AG04450 (cell line): ENCODE measurements at regions of chr13 and their contacts with region 1.

Region 1: GRCh38 chr13:36282818-36283445 is 14.7 kb downstream of the CCDC169 start:
- DNase-seq: peak; percentile 4
- H3K4me3 ChIP-seq: no peak overlapping the region
- H3K27ac ChIP-seq: no peak overlapping the region
- H3K27me3 ChIP-seq: no peaks in the 10 kb centered on the region
- CTCF ChIP-seq: peak; percentile 88

Region 2: GRCh38 chr13:36261976-36262375 is 21.0 kb before region 1 on chr13:
- CTCF ChIA-PET with region 1: interaction called, 12 read pairs
- POLR2A ChIA-PET with region 1: no interaction called
- DNase-seq: no peak
- H3K4me3 ChIP-seq: no peak overlapping the region
- H3K27ac ChIP-seq: no peak overlapping the region
- H3K27me3 ChIP-seq: no peaks in the 10 kb centered on the region
- CTCF ChIP-seq: no peak

Region 3: GRCh38 chr13:36306072-36306471 is 23.1 kb after region 1 on chr13:
- CTCF ChIA-PET with region 1: interaction called, 19 read pairs
- POLR2A ChIA-PET with region 1: no interaction called
- DNase-seq: no peak
- H3K4me3 ChIP-seq: no peak overlapping the region
- H3K27ac ChIP-seq: no peak overlapping the region
- H3K27me3 ChIP-seq: no peaks in the 10 kb centered on the region
- CTCF ChIP-seq: no peak

Region 4: GRCh38 chr13:36346222-36347083 is 63.5 kb after region 1 on chr13 and contains the start of gene SPART:
- CTCF ChIA-PET with region 1: interaction called, 18 read pairs
- POLR2A ChIA-PET with region 1: no interaction called
- DNase-seq: peak; percentile 78
- H3K4me3 ChIP-seq: peak within 1 kb of the TSS; percentile 83
- H3K27ac ChIP-seq: peak within 1 kb of the TSS; percentile 100
- H3K27me3 ChIP-seq: no peaks in the 10 kb centered on the region
- CTCF ChIP-seq: peak; percentile 98
- polyA plus RNA-seq, gene SPART: 69.7 and 94.6 TPM in 2 replicates

Region 5: GRCh38 chr13:36395280-36395679 is 112.3 kb after region 1 on chr13:
- CTCF ChIA-PET with region 1: interaction called, 90 read pairs
- POLR2A ChIA-PET with region 1: no interaction called
- DNase-seq: peak; percentile 27
- H3K4me3 ChIP-seq: no peak overlapping the region
- H3K27ac ChIP-seq: no peak overlapping the region
- H3K27me3 ChIP-seq: no peaks in the 10 kb centered on the region
- CTCF ChIP-seq: peak; percentile 69

Region 6: GRCh38 chr13:36666477-36667229 is 383.7 kb after region 1 on chr13:
- CTCF ChIA-PET with region 1: no interaction called
- POLR2A ChIA-PET with region 1: no interaction called
- DNase-seq: no peak
- H3K4me3 ChIP-seq: no peak overlapping the region
- H3K27ac ChIP-seq: no peak overlapping the region
- H3K27me3 ChIP-seq: no peaks in the 10 kb centered on the region
- CTCF ChIP-seq: no peak

Region 7: DNA sequence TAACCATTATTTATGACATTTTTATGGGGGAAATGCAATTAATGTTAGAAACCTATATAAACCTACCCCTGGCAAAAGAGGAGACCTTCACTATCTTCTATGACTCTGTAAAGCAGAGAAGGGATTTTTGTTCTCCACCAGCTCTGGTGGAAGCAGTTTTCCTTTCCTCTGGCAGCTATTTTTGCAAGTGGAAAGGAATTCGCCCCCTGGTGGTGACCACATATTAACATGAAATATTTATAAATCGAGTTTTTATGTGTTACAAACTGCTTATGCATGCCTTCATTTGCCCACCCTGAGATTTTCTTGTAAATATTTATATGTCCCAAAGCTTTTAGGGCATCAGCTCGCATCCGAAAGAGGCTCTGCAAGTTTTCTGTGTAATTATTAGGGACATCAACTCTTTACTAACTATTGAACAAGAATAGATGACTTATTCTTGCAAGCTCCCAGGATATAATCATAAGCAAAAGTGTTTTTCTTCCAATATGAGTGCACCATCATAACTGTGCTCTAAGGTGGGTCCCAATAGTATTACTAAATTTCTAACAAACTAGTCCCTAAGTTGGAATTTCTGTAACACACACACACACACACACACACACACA is 453.3 kb after region 1 on chr13:
- CTCF ChIA-PET with region 1: interaction called, 108 read pairs
- POLR2A ChIA-PET with region 1: no interaction called
- DNase-seq: peak; percentile 37
- H3K4me3 ChIP-seq: no peak overlapping the region
- H3K27ac ChIP-seq: no peak overlapping the region
- H3K27me3 ChIP-seq: no peaks in the 10 kb centered on the region
- CTCF ChIP-seq: peak; percentile 74